ENCODE measurements at regions of chr1 and their contacts with region 1.

Region 1: DNA sequence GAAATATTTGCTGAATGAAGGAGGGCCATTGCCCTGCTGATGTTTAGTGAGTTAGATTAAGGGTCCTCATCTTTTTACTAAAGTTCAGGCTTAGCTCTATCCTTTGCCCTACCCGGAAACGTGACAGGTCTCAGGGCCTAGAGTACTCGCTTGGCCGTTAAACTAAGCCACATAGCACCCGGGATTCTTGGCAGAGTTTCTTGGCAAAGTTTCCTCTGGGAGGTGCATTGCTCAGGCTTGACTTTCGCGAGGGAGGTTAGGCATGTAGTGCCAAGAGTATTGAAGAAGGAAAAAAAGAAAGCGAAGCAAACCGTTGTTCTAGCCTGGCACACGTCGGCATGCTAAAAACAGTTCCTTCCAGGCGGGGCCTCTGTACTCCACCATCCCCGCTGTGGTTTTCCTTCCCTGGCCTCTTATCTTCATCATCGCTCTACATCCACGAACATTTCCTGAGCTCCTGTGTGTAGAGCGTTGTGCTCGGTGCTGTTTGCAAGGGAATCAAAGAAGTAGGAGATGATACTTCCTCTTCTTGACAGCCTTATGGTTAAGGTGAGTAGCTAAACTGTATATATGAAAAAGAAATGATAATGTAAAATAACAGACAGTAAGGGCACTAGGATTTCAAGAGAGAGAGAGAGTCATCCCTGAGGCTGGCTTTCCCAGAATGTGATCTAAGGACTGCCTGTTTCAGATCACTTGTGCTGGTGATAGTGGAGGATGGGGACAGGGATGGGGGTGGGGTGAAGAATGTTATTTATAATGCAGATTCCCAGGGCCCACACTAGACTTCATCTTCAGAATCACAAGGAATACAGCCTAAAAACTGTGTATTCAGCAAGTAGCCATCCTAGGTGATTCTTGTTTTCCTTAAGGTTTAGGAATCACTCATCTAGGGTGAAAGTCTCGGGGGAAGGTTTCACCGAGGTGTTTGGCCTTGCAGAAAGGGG is 18.8 kb downstream of the RNF220 start:
- DNase-seq: no peak

Region 2: GRCh38 chr1:44484155-44484688 is 60.4 kb after region 1 on chr1:
- intact Hi-C with region 1: loop called (anchors 5 kb)
- DNase-seq: peak; percentile 76

Region 3: GRCh38 chr1:44500181-44501046 is 76.5 kb after region 1 on chr1:
- intact Hi-C with region 1: loop called (anchors 2 kb)
- DNase-seq: no peak

Measured in cardiac septum (tissue), 1 donor.